ENCODE measurements at regions of chr11 and their contacts with region 1.

Region 1: DNA sequence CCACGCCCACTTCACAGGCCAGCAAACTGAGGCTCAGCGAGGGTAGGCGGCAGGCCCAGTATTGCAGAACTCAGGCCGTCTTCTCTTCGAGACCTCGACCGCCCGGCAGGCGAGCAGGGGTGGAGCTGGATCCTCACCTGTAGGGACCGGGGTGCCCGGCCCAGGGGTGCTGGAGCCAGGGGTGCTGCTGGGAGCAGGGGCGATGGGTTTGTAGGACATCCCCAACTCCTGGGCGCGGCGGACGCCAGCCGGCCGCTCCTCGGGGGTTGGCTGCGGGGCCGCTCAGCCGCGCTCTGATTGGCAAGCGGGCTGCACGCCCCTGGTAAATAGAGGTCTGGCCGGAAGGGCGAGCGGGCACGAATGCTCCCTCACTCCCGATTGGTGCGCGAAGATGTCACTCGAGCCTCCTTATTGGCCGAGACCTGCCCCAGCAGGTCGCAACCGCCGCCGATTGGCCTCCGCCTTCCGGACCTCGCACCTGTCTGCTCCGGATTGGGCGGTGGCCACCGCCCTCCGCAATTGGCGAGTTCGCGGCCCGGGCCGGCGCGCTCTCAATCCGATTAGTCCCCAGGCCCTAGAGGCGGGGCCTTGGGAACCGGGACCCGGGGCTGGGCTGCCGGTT is at the start of gene CDK2AP2:
- DNase-seq: peak; percentile 96 to 98 (median 97)
- H3K4me3 ChIP-seq: peak within 1 kb of the TSS; percentile 77 to 79
- H3K4me3 Mint-ChIP-seq: peak within 1 kb of the TSS; percentile 88 to 98 (median 90)
- H3K27ac ChIP-seq: peak within 1 kb of the TSS; percentile 93
- H3K27ac Mint-ChIP-seq: peak within 1 kb of the TSS; percentile 97 to 99 (median 99)
- H3K4me1 ChIP-seq: peaks cover 44% of the 10 kb centered on the region
- H3K4me1 Mint-ChIP-seq: peaks cover 20 to 55% (median 33%) of the 10 kb centered on the region in 4 donors
- H3K27me3 ChIP-seq: no peaks in the 10 kb centered on the region
- H3K27me3 Mint-ChIP-seq: peaks cover 3% of the 10 kb centered on the region in 2 donors
- total RNA-seq, gene CDK2AP2: 85.8 to 86.0 TPM

Region 2: GRCh38 chr11:67277231-67277961 is 230.6 kb before region 1 on chr11:
- CTCF ChIA-PET with region 1: no interaction called
- POLR2A ChIA-PET with region 1: no interaction called
- intact Hi-C with region 1: loop called (anchors 5 kb)
- DNase-seq: peak; percentile 92 to 96 (median 93)
- H3K4me3 ChIP-seq: peak overlapping the region; percentile 63 to 71
- H3K4me3 Mint-ChIP-seq: peak overlapping the region; percentile 79 to 92 (median 83)
- H3K27ac ChIP-seq: peak overlapping the region; percentile 95
- H3K27ac Mint-ChIP-seq: peak overlapping the region; percentile 94 to 99 (median 97)
- H3K4me1 ChIP-seq: peaks cover 98% of the 10 kb centered on the region
- H3K4me1 Mint-ChIP-seq: peaks cover 25 to 90% (median 54%) of the 10 kb centered on the region in 4 donors
- H3K27me3 ChIP-seq: no peaks in the 10 kb centered on the region
- H3K27me3 Mint-ChIP-seq: no peaks in the 10 kb centered on the region

Region 3: GRCh38 chr11:67409261-67409666 is 98.7 kb before region 1 on chr11:
- CTCF ChIA-PET with region 1: interaction called, 3 read pairs
- POLR2A ChIA-PET with region 1: interaction called, 78 read pairs
- intact Hi-C with region 1: no loop called
- DNase-seq: peak; percentile 80 to 85 (median 83)
- H3K4me3 ChIP-seq: peak overlapping the region; percentile 48 to 77
- H3K4me3 Mint-ChIP-seq: peak overlapping the region; percentile 85 to 100 (median 94)
- H3K27ac ChIP-seq: peak overlapping the region; percentile 81
- H3K27ac Mint-ChIP-seq: peak overlapping the region; percentile 37 to 98 (median 72)
- H3K4me1 ChIP-seq: peaks cover 91% of the 10 kb centered on the region
- H3K4me1 Mint-ChIP-seq: peaks cover 49 to 97% (median 67%) of the 10 kb centered on the region in 4 donors
- H3K27me3 ChIP-seq: no peaks in the 10 kb centered on the region
- H3K27me3 Mint-ChIP-seq: no peaks in the 10 kb centered on the region

Region 4: DNA sequence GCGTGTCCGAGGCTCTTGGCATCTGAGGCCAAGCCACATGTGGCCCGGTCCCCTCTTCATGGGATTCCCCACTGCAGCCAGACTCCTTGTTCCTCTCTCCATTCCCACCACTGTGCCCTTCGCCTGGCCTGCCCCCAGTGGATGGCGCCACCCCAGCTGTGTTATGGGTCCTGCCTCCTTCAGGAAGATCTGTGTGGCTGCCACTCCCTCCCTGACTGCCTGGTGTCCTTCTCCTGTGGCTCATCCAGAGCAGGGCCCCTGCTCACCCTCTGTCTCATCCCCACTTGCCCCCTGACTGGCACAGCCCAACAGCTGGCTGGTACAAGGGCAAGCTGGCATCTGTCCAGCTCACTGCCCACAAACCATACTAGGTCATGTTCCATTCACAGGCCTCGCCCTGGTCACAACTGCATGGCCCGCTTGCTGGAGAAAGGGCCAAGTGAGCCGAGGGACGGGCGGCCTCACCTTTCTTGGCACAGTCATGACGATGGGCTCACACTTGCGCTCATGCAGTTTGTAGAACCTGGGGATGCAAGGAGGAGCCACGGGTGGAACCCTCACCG is 68.6 kb before region 1 on chr11:
- CTCF ChIA-PET with region 1: no interaction called
- POLR2A ChIA-PET with region 1: interaction called, 33 read pairs
- intact Hi-C with region 1: loop called (anchors 2 kb)
- DNase-seq: peak in 1 of 5 donors; percentile 34
- H3K4me3 ChIP-seq: peak overlapping the region; percentile 29 to 81
- H3K4me3 Mint-ChIP-seq: peak overlapping the region; percentile 96 to 99 (median 97)
- H3K27ac ChIP-seq: peak overlapping the region; percentile 78
- H3K27ac Mint-ChIP-seq: peak overlapping the region; percentile 92 to 98 (median 96)
- H3K4me1 ChIP-seq: peaks cover 69% of the 10 kb centered on the region
- H3K4me1 Mint-ChIP-seq: peaks cover 35 to 81% (median 53%) of the 10 kb centered on the region in 4 donors
- H3K27me3 ChIP-seq: no peaks in the 10 kb centered on the region
- H3K27me3 Mint-ChIP-seq: no peaks in the 10 kb centered on the region

Region 5: DNA sequence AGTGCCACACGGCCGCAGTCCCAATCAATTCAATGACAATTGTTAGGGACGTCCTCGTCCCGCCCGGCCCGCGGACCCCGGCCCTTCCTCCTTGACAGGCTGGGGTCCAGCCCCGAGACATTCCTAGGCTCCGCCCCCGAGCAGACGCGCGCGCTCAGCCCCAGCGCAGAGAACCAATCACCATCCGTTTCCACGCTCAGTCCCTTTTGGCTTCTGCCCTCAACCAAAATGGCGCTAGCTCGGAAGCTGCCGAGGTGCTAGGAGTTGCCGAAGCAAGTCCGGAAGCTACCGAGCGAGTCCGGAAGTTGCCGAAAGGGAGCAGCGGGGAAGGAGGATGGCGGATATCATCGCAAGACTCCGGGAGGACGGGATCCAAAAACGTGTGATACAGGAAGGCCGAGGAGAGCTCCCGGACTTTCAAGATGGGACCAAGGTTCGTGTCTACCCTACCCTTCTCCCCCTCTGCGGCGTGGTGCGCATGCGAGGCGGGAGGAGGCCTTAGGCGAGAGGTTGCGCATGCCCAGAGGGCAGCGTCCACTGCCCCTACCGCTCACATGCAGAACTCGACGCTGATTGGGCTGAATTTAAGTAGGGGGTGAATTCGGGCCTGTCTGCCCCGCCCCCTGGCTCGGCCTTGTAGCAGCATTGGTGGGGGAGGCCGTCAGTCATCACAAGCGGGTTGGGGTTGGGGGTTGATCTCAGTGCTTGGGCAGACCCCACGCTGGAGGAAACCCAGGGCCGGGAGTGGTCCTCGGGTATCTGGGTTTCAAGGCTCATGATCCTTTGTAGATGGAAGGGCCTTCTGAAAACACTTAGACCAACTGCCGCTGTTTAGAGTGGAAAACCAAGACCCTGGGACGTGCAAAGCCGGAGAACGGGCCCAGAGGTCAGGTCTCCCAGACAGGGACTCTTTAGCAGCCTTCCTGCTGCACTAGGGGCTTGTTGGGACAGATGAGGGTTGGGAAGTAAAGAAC is 24.9 kb before region 1 on chr11 and contains the start of gene AIP:
- CTCF ChIA-PET with region 1: interaction called, 4 read pairs
- POLR2A ChIA-PET with region 1: interaction called, 124 read pairs
- intact Hi-C with region 1: loop called (anchors 1 kb)
- DNase-seq: peak; percentile 97 to 98 (median 98)
- H3K4me3 ChIP-seq: peak within 1 kb of the TSS; percentile 64 to 78
- H3K4me3 Mint-ChIP-seq: peak within 1 kb of the TSS; percentile 95 to 100 (median 98)
- H3K27ac ChIP-seq: peak within 1 kb of the TSS; percentile 91
- H3K27ac Mint-ChIP-seq: peak within 1 kb of the TSS; percentile 94 to 100 (median 99)
- H3K4me1 ChIP-seq: peaks cover 57% of the 10 kb centered on the region
- H3K4me1 Mint-ChIP-seq: peaks cover 41 to 59% (median 50%) of the 10 kb centered on the region in 4 donors
- H3K27me3 ChIP-seq: no peaks in the 10 kb centered on the region
- H3K27me3 Mint-ChIP-seq: no peaks in the 10 kb centered on the region
- total RNA-seq, gene AIP: 131 to 132 TPM

Region 6: DNA sequence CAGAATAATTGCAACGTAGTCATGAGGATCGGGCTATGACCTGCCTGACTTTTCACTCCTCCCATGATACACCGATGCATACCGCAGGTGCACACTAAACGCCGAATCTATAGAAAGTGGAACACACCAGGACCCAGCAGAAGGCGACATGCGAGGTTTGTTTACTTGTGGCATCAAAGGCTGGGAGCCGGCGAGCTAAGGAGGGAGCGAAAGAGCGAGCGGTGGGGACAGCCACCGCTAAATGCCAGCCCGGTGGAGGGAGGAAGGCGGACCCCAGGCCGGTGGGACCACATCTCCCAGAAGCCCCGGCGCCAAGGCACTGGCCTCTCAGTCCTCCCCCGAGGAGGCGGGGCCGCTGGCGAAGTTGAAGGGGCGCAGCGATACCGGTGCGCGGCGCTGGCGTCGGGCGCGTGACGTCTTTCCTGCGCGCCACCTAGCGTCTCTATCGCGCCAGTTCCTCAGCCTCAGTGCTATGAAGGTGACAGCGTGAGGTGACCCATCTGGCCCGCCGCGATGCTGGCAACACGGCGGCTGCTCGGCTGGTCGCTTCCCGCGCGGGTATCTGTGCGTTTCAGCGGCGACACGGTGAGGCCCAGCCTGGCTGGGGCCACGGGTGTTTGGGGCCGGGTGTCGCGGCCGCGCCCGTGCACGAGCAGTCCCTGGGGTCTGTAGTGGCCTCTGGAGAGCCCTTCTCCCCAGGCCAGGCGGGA is 98.7 kb after region 1 on chr11 and contains the start of gene NDUFV1:
- CTCF ChIA-PET with region 1: no interaction called
- POLR2A ChIA-PET with region 1: no interaction called
- intact Hi-C with region 1: loop called (anchors 1 kb)
- DNase-seq: peak; percentile 94 to 96 (median 94)
- H3K4me3 ChIP-seq: peak within 1 kb of the TSS; percentile 38 to 86
- H3K4me3 Mint-ChIP-seq: peak within 1 kb of the TSS; percentile 86 to 97 (median 92)
- H3K27ac ChIP-seq: peak within 1 kb of the TSS; percentile 83
- H3K27ac Mint-ChIP-seq: peak within 1 kb of the TSS; percentile 76 to 97 (median 93)
- H3K4me1 ChIP-seq: peaks cover 13% of the 10 kb centered on the region
- H3K4me1 Mint-ChIP-seq: peaks cover 4 to 27% (median 9%) of the 10 kb centered on the region in 4 donors
- H3K27me3 ChIP-seq: no peaks in the 10 kb centered on the region
- H3K27me3 Mint-ChIP-seq: peaks cover 2 to 6% of the 10 kb centered on the region in 2 donors
- total RNA-seq, gene NDUFV1: 204 to 212 TPM

Region 7: DNA sequence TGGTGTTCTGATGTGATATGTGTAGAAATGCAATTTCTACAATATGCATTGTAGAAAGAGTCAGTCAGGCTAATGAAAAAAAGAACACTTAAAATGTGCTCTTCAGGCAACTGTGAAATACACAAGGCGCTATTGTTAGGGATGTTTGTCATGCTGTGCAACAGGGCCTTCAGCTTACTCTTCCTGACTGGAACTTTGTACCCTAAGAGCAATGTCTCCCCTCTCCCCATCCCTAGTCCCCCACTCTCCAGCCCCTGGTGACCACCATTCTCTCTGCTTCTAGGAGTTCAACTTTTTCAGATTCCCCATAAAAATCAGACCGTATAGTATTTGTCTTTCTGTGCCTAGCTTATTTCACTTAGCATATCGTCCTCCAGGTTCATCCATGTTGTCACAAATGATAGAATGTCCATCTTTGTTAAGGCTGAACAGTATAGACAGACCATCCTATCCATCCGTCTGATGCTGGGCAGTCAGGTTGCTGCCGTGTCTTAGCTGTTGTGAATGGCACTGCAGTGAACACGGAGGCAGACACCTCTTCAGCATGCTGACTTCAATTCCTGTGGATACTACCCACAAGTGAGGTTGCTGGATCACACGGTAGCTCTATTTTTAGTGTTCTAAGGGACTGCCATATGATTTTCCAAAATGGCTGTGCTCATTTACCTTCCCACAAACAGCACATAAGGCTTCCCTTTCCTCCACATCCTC is 109.4 kb after region 1 on chr11:
- CTCF ChIA-PET with region 1: no interaction called
- POLR2A ChIA-PET with region 1: no interaction called
- intact Hi-C with region 1: no loop called
- DNase-seq: no peak
- H3K4me3 ChIP-seq: no peak overlapping the region
- H3K4me3 Mint-ChIP-seq: peak overlapping the region in 3 of 8 donors; percentile 25 to 49 (median 45)
- H3K27ac ChIP-seq: no peak overlapping the region
- H3K27ac Mint-ChIP-seq: peak overlapping the region; percentile 39 to 86 (median 72)
- H3K4me1 ChIP-seq: peaks cover 33% of the 10 kb centered on the region
- H3K4me1 Mint-ChIP-seq: peaks cover 13 to 32% (median 20%) of the 10 kb centered on the region in 4 donors
- H3K27me3 ChIP-seq: no peaks in the 10 kb centered on the region
- H3K27me3 Mint-ChIP-seq: peaks cover 0 to 2% of the 10 kb centered on the region in 2 donors